Right cardiac atrium (tissue), 5 donors: ENCODE measurements at regions of chr10 and their contacts with region 1.

Region 1: DNA sequence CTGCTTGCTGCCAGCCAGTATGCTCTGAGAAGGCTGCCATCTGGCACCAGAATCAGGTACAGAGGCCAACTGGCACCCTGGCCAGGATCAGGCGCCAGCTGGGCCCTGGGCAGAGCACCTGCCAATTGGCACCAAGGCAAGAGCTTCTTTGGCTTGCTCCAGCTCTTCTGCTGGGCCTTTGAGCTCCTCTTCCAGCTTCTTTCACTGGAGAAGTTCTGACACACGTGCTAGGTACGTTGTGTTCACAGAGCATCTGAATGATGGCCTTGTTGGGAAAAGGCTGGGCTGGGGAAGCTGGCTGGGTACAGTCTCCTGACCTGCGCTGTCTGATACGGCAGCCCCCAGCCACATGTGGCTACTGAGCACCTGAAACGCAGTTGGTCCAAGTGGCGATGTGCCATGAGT is 31.7 kb upstream of the OPALIN start:
- DNase-seq: peak; percentile 60 to 88 (median 84)
- ATAC-seq: peak; percentile 86 to 87
- H3K4me3 ChIP-seq: no peak overlapping the region
- H3K27ac ChIP-seq: peak overlapping the region; percentile 43
- H3K4me1 ChIP-seq: peaks cover 3% of the 10 kb centered on the region
- H3K27me3 ChIP-seq: no peaks in the 10 kb centered on the region

Region 2: DNA sequence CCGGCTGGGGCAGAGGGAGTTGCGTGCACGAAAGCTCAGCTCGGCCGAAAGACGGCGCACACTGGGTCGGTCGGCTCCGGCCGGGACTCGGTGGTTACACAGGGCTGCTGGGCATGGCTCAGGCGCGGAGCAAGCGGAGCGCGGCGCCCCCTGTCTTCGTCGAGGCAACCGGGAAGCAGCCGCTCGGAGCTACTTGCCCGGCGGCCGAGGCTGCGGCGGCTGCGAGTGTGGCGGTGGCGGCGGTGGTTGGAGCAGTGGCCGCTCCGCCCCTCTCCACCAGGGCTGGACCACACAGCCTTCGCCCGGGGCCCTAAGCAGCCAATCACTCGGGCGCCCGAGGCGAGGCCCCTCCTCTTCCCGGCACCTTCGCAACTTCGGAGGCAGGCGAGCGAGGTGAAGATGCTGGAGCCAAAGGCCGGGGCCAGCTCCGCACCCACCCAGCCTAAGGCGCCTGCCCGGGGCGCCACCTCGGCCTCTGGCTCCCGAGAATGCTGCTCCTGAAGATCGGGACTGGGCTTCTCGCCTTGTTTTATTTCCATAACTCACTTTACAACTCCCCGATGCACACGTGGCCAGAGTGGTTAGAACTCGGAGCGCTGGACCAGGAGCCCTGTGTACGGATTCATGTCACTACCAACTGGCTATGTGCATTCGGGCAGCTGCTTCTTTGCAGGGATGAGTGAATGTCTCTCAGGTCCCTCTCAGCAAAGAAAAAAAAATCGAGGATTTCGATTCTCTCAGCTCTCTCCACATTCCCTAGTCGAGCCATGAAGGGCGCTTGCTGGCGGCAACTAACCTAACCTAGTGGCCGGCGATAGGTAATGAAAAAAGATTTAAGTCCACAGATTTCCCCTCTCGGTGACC is 123.5 kb after region 1 on chr10 and contains the start of gene TLL2:
- intact Hi-C with region 1: loop called in 3 of 4 experiments (anchors 5 kb)
- DNase-seq: peak; percentile 90 to 96 (median 95)
- ATAC-seq: peak; percentile 98
- H3K4me3 ChIP-seq: peak within 1 kb of the TSS; percentile 54
- H3K27ac ChIP-seq: no peak within 1 kb of the TSS
- H3K4me1 ChIP-seq: peaks cover 4% of the 10 kb centered on the region
- H3K27me3 ChIP-seq: no peaks in the 10 kb centered on the region
- total RNA-seq, gene TLL2: 1.4 to 5.2 (median 2.6) TPM